Posterior cingulate gyrus (tissue), 11 donors: ENCODE measurements at regions of chr2 and their contacts with region 1.

Region 1: DNA sequence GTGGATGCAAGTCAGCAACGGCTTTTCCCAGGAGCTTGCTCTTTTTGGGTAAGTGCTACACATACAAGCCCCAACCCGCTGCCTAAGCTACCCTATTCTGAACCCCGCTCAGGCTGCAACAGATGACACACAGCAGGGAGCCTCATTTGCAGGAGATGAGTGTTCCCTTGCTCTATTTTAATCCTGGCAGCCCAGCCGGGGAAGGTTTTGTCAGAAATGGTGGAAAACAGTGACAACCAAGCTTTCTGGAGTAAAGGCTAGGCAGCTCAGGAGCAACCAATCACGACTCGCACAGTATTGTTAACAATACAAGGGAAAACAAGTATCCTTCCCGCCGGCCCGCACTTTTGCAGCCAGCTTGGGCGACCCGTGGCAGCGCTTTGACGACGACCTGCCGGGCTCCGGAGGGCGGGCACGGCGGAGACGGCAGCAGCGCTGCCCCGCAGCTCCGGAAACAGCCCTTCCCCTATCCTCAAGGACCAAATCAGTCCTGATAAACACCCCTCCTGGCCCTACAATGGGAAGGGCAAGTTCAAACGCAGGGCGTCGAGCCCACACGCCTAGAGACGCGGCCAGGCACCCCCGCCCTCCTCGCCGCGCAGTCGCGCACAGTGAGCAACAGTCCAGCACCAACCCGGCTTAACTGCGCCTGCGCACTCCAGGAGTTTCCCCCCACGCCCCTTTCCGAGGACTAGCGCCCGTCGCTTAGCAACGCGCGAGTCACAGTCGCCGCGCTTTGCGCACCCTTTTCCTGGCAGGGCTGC is 74.3 kb upstream of the TSPYL6 start:
- DNase-seq: peak; percentile 94 to 99 (median 97)

Region 2: GRCh38 chr2:54106631-54107454 is 223.5 kb before region 1 on chr2:
- intact Hi-C with region 1: loop called (anchors 10 kb)
- DNase-seq: peak in 8 of 10 donors; percentile 23 to 87 (median 54)

Region 3: DNA sequence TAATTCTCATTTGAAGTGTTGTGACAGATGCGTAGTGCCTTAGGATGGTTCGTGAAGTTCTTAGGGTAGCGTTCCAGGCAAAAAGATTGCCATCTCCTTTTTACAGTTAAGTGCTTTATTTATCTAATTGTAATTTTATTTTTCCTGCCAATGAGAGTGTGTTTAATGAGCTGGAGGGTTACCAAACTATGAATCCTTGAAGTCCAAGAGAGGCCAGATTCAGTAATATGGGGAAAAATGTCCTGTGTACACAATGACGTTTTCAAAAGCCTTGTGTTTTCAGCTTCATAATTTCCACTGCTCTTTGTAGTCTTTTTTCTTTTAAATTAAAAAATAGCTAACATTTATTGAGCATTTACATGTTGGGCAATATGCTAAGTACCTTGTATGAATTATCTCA is 191.1 kb before region 1 on chr2:
- intact Hi-C with region 1: no loop called
- DNase-seq: no peak

Region 4: GRCh38 chr2:54206596-54206995 is 123.7 kb before region 1 on chr2:
- intact Hi-C with region 1: loop called (anchors 5 kb)
- DNase-seq: no peak

Region 5: DNA sequence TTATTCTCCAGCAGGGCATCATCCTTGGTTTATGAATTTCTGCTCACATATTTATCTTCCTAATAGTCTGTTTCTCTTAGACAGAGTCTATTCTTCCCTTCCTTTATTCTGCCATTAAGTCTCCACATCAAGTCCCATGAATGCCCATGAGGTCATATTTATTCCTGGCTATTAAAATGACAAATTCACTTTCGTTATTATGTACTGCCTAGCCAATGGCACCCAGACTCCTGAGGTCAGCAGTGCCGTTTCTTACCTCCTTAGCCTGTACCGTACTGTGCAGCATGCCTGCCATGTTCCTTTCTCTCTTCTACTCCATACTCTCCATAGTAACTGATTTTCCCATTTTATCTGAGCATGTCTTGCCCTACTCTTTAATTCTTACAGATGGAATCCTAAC is 43.5 kb after region 1 on chr2:
- intact Hi-C with region 1: no loop called
- DNase-seq: no peak

Region 6: DNA sequence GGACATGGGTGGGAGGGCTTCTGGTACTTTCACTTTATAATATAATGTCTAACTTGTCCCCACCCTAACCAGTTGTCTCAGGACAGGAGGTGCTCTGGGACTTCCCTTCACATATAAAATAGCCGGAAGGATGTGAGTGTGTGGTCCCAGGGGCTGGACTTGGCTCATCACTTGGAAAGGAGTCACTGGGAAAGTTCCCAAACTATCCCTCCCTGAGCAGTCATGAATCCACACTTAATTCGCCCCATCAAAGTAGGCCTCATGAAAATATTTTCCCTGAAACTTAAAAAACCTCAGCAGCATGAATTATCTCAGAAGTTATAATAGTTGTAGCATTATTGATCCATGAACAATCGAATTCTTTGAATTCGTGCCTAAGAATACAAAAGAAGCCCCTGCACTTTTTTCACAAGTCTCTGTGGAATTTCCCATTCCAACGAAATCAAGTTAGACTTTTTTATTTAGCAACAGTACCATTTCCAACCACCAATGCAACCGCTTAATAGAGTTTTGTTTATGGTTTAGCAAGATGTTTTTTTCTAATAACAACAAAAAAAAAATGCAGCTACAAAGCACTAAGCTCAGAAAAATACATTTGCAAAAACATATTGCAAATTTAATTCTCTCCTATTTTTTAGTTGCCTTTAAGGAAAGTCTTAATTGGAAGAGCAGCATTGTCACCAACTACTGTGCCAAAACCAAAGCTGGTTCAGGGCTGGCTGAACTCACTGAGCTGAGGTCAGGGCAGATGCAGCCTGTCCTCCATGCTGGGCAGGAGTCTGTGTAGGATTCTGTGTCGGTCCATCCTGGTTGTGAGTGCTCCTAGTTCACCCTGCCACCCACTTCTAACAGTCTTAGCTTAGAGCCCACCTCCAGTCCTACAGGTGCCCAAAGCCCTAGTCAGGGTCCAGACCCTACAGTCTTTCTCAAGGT is 57.0 kb after region 1 on chr2:
- intact Hi-C with region 1: loop called (anchors 10 kb)
- DNase-seq: no peak

Region 7: GRCh38 chr2:54723131-54723995 is 393.0 kb after region 1 on chr2 and contains the start of gene EML6:
- intact Hi-C with region 1: loop called (anchors 10 kb)
- DNase-seq: peak; percentile 95 to 100 (median 98)

Region 8: DNA sequence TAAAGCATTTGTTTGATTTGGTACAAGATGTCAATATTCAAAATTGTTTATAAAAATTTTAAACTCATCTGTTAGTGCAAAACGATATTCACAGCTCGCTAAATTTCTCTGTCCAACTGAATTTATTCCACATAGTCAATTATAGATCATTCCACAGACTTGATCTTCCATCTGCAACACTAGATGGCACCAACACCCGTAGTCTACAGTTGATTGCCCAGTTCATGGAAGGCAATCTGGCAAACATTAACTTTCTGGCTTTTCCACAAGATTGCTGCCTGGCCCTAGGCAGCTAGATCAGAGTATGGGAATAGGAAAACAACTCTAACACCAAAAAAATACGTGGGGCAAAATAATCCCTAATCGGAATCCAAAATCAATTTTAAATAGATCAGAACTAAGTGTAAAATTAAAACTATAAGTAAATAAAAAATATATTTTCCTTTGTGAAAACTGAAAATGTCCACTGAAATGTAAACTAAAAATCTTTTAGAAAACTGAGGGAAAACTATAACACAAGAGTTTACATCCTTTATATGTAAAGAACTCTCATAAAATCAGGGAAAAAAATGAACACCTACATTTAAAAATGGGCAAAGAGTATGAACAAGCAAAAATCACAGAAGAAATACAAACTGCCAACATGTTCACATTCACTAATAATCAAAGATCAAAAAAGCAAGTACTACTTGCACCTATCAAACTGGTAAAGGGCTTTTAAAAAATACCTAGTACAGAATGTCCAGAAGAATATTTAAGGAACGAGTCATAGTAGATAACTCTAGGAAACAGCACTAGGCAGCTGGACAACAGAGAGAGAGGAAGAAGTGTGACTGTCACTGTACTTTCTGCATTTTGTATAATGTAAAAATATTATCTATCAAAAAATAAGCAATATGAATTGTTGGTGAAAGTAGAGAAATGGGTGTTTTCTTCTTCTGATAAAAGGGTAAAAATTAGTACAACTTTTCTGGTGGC is 684.9 kb after region 1 on chr2:
- intact Hi-C with region 1: no loop called
- DNase-seq: peak in 6 of 10 donors; percentile 29 to 84 (median 42)